GM23248 (cell line): ENCODE measurements at regions of chr11 and their contacts with region 1.

Region 1: DNA sequence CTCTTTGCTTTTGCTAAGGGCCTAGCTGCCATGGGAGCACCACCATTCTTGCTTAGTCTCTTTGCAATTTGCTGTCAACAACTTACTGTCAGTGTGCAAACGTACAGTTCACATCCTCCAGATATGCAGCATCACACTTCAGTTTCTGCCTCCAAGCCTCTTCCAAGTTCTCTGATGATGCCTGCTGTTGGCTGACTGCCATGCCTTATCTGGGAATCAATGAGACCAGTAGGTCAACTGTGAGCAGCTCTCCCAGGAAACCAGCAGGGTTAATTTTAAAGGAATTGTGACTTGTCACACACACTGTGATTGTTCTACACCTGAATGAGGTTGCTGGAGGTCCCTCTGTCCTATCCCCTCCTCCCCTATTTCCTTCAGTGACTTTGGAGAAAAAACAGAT is 56.0 kb downstream of the COPB1 start:
- DNase-seq: peak; percentile 57
- H3K4me3 ChIP-seq: no peak overlapping the region
- H3K27ac ChIP-seq: peak overlapping the region; percentile 7
- H3K4me1 ChIP-seq: peaks cover 57% of the 10 kb centered on the region
- H3K27me3 ChIP-seq: no peaks in the 10 kb centered on the region

Region 2: DNA sequence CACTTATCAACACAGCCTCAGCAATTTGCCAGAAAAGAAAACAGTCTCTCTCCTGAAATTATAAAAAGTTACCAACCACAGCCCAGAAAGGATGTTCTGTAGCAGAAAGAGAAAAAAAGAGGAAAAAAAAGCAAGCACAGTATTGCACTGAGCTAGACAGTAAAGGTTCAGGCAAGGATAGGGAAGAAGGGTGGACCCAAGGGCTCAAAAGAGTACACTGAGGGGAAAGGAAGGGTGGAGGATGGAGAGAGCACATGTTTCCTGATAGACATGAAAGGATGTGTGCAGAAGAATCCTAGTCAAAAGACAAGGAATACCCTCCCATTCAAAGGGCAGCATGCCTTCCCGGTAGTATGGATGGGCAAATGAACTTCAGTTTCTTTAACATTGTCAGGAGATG is 143.7 kb before region 1 on chr11:
- in situ Hi-C with region 1: loop called (anchors 5 kb)
- DNase-seq: no peak
- H3K4me3 ChIP-seq: no peak overlapping the region
- H3K27ac ChIP-seq: peak overlapping the region; percentile 45
- H3K4me1 ChIP-seq: peaks cover 56% of the 10 kb centered on the region
- H3K27me3 ChIP-seq: no peaks in the 10 kb centered on the region

Region 3: GRCh38 chr11:14320020-14320419 is 123.6 kb before region 1 on chr11:
- in situ Hi-C with region 1: no loop called
- DNase-seq: peak; percentile 41
- H3K4me3 ChIP-seq: no peak overlapping the region
- H3K27ac ChIP-seq: peak overlapping the region; percentile 20
- H3K4me1 ChIP-seq: peaks cover 41% of the 10 kb centered on the region
- H3K27me3 ChIP-seq: no peaks in the 10 kb centered on the region